ENCODE measurements at regions of chr2 and their contacts with region 1.

Region 1: DNA sequence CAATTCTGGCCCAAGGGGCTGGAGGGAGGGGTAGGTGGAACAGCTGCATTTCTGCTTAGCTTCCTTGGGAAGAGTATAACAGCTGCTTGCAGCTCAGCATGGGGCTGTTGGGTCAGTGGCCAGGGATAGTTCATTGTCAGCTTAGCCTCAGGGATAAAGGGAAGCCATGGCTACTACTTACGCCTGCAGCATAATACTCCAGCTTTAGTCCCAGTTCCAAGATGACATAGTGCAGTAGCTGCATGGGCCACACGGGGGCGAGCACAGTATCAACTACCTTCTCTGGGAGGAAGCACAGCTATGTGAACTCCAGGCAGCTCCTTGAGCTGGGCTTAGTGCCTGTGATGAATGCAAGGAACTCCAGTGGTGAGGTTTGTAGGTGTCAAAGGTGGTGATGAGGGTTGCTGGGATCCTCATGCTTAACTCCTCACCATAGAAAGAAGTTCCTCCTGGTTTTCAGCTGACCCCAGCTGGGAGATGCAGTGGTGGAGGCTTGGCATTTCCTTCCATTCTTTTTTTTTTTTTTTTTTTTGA is 35.4 kb upstream of the RHOB start:
- DNase-seq: peak; percentile 89
- ATAC-seq: peak; percentile 100
- H3K4me3 Mint-ChIP-seq: no peak overlapping the region
- H3K27ac Mint-ChIP-seq: no peak overlapping the region
- H3K4me1 Mint-ChIP-seq: no peaks in the 10 kb centered on the region
- H3K27me3 Mint-ChIP-seq: peaks cover 6% of the 10 kb centered on the region
- CTCF ChIP-seq: peak; percentile 78

Region 2: GRCh38 chr2:20326163-20326780 is 85.2 kb before region 1 on chr2:
- CTCF ChIA-PET with region 1: interaction called, 14 read pairs
- POLR2A ChIA-PET with region 1: no interaction called
- DNase-seq: peak; percentile 36
- ATAC-seq: peak; percentile 92
- H3K4me3 Mint-ChIP-seq: no peak overlapping the region
- H3K27ac Mint-ChIP-seq: no peak overlapping the region
- H3K4me1 Mint-ChIP-seq: peaks cover 62% of the 10 kb centered on the region
- H3K27me3 Mint-ChIP-seq: no peaks in the 10 kb centered on the region
- CTCF ChIP-seq: peak; percentile 50

Region 3: DNA sequence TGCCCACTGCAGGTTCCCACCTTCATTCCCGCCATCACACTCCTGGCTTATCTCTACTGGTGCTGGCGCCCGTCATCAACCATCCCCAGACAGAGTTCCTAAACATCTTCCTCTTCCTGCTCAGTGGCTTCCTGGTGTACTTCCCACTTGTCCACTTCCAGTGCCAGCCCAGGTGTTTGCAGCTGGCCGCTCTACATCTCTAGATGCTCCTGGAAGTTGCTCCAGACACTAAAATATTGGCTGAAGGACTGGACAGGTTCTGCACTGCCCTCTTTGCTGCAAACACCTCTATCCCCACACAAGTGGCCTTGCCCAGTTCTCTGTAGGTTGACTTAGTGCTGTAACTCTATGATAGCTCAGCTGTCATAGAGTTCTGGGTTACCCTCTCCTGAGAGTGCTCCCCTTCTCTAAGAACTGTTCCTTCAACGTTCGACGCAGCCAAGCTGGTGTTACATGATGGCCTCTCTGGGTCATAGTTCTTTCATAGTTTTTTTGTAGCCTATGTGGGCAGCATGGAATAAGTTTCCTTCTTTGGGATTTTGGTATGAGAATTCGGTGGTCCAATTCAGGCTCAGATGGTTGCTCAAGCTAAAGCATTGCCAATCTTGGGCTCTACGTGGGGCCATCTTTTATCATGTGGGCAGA is 14.9 kb before region 1 on chr2:
- CTCF ChIA-PET with region 1: interaction called, 13 read pairs
- POLR2A ChIA-PET with region 1: no interaction called
- DNase-seq: no peak
- ATAC-seq: no peak
- H3K4me3 Mint-ChIP-seq: no peak overlapping the region
- H3K27ac Mint-ChIP-seq: no peak overlapping the region
- H3K4me1 Mint-ChIP-seq: no peaks in the 10 kb centered on the region
- H3K27me3 Mint-ChIP-seq: no peaks in the 10 kb centered on the region
- CTCF ChIP-seq: no peak

Region 4: GRCh38 chr2:20438334-20439192 is 27.1 kb after region 1 on chr2:
- CTCF ChIA-PET with region 1: interaction called, 25 read pairs
- POLR2A ChIA-PET with region 1: no interaction called
- DNase-seq: no peak
- ATAC-seq: no peak
- H3K4me3 Mint-ChIP-seq: no peak overlapping the region
- H3K27ac Mint-ChIP-seq: no peak overlapping the region
- H3K4me1 Mint-ChIP-seq: peaks cover 6% of the 10 kb centered on the region; the same call in 1 of the 2 replicates
- H3K27me3 Mint-ChIP-seq: no peaks in the 10 kb centered on the region; the same call in 1 of the 2 replicates
- CTCF ChIP-seq: no peak

Region 5: GRCh38 chr2:20642055-20642971 is 230.9 kb after region 1 on chr2:
- CTCF ChIA-PET with region 1: interaction called, 52 read pairs
- POLR2A ChIA-PET with region 1: interaction called, 7 read pairs
- DNase-seq: peak; percentile 80
- ATAC-seq: peak; percentile 97
- H3K4me3 Mint-ChIP-seq: no peak overlapping the region
- H3K27ac Mint-ChIP-seq: no peak overlapping the region
- H3K4me1 Mint-ChIP-seq: no peaks in the 10 kb centered on the region
- H3K27me3 Mint-ChIP-seq: no peaks in the 10 kb centered on the region
- CTCF ChIP-seq: peak; percentile 93